ENCODE measurements at regions of chr2 and their contacts with region 1.

Region 1: DNA sequence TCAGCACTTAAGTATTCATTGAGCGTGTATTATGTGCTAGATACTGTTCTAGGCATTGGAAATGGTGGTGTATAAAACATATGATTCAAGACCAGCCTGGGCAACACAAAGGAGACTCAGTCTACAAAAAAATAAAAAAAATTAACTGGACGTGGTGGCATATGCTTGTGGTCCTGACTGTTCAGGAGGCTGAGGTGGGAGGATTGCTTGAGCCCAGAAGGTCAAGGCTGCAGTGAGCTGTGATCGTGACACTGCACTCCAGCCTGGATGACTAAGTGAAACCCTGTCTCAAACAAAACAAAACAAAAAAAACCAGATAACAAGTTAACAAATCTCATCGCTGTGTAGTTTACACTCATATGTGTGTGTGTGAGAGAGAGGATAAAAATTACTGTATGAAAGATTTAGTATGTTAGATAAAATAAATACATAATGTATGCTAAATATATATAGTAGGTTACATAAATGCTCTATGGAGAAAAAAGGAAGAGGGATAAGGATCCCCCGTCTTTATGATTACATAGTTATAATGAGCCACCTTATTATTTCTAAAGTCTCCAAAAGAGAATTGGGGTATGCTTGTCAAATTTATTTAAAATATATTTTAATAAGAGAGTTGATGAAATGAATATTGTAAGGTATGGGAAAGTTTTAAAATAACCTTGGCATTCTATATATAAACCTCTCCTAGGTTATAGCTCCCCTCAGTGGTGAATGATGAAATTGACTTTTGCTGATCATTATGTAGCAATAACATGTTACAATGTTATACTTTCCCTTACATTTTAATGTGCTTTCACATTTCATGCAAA is 69.2 kb downstream of the EHBP1 start:
- DNase-seq: peak; percentile 29 to 54
- H3K4me3 ChIP-seq: no peak overlapping the region
- H3K27ac ChIP-seq: peak overlapping the region; percentile 68
- H3K4me1 ChIP-seq: peaks cover 5% of the 10 kb centered on the region; the same call in 1 of the 2 replicates
- H3K27me3 ChIP-seq: no peaks in the 10 kb centered on the region
- CTCF ChIP-seq: peak; percentile 94

Region 2: GRCh38 chr2:61910603-61911002 is 864.2 kb before region 1 on chr2:
- CTCF ChIA-PET with region 1: no interaction called
- POLR2A ChIA-PET with region 1: no interaction called
- intact Hi-C with region 1: loop called (anchors 5 kb)
- DNase-seq: peak in 1 of 2 experiments; percentile 17
- H3K4me3 ChIP-seq: no peak overlapping the region
- H3K27ac ChIP-seq: no peak overlapping the region
- H3K4me1 ChIP-seq: peaks cover 13% of the 10 kb centered on the region; the same call in 1 of the 2 replicates
- H3K27me3 ChIP-seq: no peaks in the 10 kb centered on the region
- CTCF ChIP-seq: peak; percentile 57

Region 3: GRCh38 chr2:62415019-62415431 is 359.7 kb before region 1 on chr2:
- CTCF ChIA-PET with region 1: interaction called, 4 read pairs
- POLR2A ChIA-PET with region 1: no interaction called
- intact Hi-C with region 1: loop called (anchors 2 kb)
- DNase-seq: no peak
- H3K4me3 ChIP-seq: no peak overlapping the region
- H3K27ac ChIP-seq: no peak overlapping the region
- H3K4me1 ChIP-seq: peaks cover 25% of the 10 kb centered on the region
- H3K27me3 ChIP-seq: no peaks in the 10 kb centered on the region
- CTCF ChIP-seq: no peak

Region 4: GRCh38 chr2:62577994-62578781 is 196.6 kb before region 1 on chr2:
- CTCF ChIA-PET with region 1: interaction called, 3 read pairs
- POLR2A ChIA-PET with region 1: no interaction called
- intact Hi-C with region 1: loop called (anchors 2 kb)
- DNase-seq: peak; percentile 45 to 98
- H3K4me3 ChIP-seq: peak overlapping the region; percentile 24; the same call in 1 of the 2 replicates
- H3K27ac ChIP-seq: peak overlapping the region; percentile 99
- H3K4me1 ChIP-seq: peaks cover 41% of the 10 kb centered on the region
- H3K27me3 ChIP-seq: no peaks in the 10 kb centered on the region
- CTCF ChIP-seq: no peak

Region 5: GRCh38 chr2:62672601-62673000 is 102.2 kb before region 1 on chr2:
- CTCF ChIA-PET with region 1: no interaction called
- POLR2A ChIA-PET with region 1: interaction called, 10 read pairs
- intact Hi-C with region 1: no loop called
- DNase-seq: peak; percentile 54 to 58
- H3K4me3 ChIP-seq: no peak overlapping the region
- H3K27ac ChIP-seq: no peak overlapping the region
- H3K4me1 ChIP-seq: peaks cover 9% of the 10 kb centered on the region
- H3K27me3 ChIP-seq: no peaks in the 10 kb centered on the region
- CTCF ChIP-seq: no peak

Region 6: GRCh38 chr2:62814123-62814522 is 39.4 kb after region 1 on chr2:
- CTCF ChIA-PET with region 1: no interaction called
- POLR2A ChIA-PET with region 1: no interaction called
- intact Hi-C with region 1: no loop called
- DNase-seq: no peak
- H3K4me3 ChIP-seq: no peak overlapping the region
- H3K27ac ChIP-seq: no peak overlapping the region
- H3K4me1 ChIP-seq: no peaks in the 10 kb centered on the region
- H3K27me3 ChIP-seq: no peaks in the 10 kb centered on the region
- CTCF ChIP-seq: no peak